CD14-positive monocyte (primary cell): ENCODE measurements at regions of chr7 and their contacts with region 1.

Region 1: DNA sequence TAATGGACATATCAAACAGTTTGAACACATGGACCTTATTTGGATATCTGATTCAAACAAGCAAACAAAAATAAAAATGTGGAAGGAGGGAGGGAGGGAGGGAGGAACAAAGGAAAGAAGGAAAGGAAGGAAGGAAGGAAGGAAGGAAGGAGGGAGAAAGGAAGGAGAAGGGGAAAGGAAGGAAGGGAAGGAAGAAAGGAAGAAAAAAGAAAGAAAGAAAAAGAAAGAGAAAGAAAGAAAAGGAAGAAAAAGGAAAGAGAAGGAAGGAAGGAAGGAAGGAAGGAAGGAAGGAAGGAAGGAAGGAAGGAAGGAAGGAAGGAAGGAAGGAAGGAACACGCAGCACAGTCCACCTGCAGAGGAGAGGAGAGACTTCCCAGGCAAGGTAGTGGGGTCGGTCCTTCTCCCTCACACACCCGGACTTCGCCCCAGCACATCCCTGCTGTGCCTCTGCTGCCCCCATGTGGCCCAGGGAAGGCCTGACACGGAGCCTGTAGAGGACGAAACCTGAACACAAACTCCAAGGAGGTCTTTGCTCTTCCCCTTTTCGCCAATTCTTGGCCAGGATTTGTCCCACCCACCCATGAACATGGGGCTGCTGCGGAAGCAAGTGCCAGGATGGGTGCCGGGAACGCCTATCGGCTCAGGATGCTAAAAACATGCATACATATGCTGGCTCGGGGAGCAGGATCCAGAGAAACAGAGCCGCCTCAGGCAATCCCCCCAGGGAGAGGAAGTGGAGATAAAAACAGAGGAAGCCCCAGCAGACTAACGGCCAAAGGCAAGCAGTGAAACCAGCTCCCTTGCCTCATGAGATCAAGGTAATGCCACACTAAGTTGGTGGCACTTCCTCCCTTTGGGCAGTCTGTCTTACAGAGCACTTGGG is 52.3 kb upstream of the DGKI start:
- DNase-seq: peak; percentile 58 to 72 (median 60)
- H3K4me3 ChIP-seq: peak overlapping the region; percentile 20 to 73 (median 29)
- H3K4me3 Mint-ChIP-seq: peak overlapping the region; percentile 73 to 91
- H3K27ac ChIP-seq: peak overlapping the region; percentile 44 to 77
- H3K27ac Mint-ChIP-seq: peak overlapping the region; percentile 65 to 92 (median 89)
- H3K4me1 ChIP-seq: peaks cover 11 to 30% of the 10 kb centered on the region in 2 donors
- H3K4me1 Mint-ChIP-seq: peaks cover 32% of the 10 kb centered on the region
- H3K27me3 ChIP-seq: no peaks in the 10 kb centered on the region
- H3K27me3 Mint-ChIP-seq: no peaks in the 10 kb centered on the region
- CTCF ChIP-seq: peak; percentile 87

Region 2: GRCh38 chr7:136062625-136063325 is 1836.3 kb before region 1 on chr7:
- intact Hi-C with region 1: no loop called
- DNase-seq: no peak
- H3K4me3 ChIP-seq: no peak overlapping the region
- H3K4me3 Mint-ChIP-seq: no peak overlapping the region
- H3K27ac ChIP-seq: no peak overlapping the region
- H3K27ac Mint-ChIP-seq: no peak overlapping the region
- H3K4me1 ChIP-seq: no peaks in the 10 kb centered on the region
- H3K4me1 Mint-ChIP-seq: no peaks in the 10 kb centered on the region
- H3K27me3 ChIP-seq: no peaks in the 10 kb centered on the region
- H3K27me3 Mint-ChIP-seq: peaks cover 3 to 6% (median 3%) of the 10 kb centered on the region in 3 donors
- CTCF ChIP-seq: no peak

Region 3: DNA sequence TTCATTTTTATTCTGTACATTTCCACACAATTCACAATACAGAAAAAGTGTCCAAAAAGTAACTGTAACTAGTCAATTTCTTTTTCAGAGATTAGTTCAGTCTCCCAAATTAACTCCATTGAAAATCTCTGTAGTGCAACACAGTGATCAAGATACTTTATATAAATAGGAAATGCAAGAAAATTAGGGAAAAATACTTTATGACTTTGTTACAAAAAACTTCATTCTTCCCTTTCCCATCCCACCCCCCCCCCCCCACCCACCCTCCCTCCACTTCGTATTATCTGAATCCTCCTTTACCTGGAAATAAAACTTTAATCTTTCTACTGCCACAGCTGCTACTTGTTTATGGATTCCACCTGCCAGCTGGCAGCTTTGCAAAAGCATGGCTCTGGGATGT is 518.0 kb before region 1 on chr7:
- intact Hi-C with region 1: no loop called
- DNase-seq: no peak
- H3K4me3 ChIP-seq: no peak overlapping the region
- H3K4me3 Mint-ChIP-seq: no peak overlapping the region
- H3K27ac ChIP-seq: no peak overlapping the region
- H3K27ac Mint-ChIP-seq: no peak overlapping the region
- H3K4me1 ChIP-seq: no peaks in the 10 kb centered on the region
- H3K4me1 Mint-ChIP-seq: no peaks in the 10 kb centered on the region
- H3K27me3 ChIP-seq: no peaks in the 10 kb centered on the region
- H3K27me3 Mint-ChIP-seq: no peaks in the 10 kb centered on the region
- CTCF ChIP-seq: no peak

Region 4: GRCh38 chr7:137667633-137668387 is 231.3 kb before region 1 on chr7:
- intact Hi-C with region 1: loop called in 1 of 2 experiments (anchors 10 kb)
- DNase-seq: no peak
- H3K4me3 ChIP-seq: no peak overlapping the region
- H3K4me3 Mint-ChIP-seq: no peak overlapping the region
- H3K27ac ChIP-seq: no peak overlapping the region
- H3K27ac Mint-ChIP-seq: no peak overlapping the region
- H3K4me1 ChIP-seq: no peaks in the 10 kb centered on the region
- H3K4me1 Mint-ChIP-seq: no peaks in the 10 kb centered on the region
- H3K27me3 ChIP-seq: peaks cover 0 to 3% of the 10 kb centered on the region in 2 donors
- H3K27me3 Mint-ChIP-seq: peaks cover 6 to 15% (median 13%) of the 10 kb centered on the region in 3 donors
- CTCF ChIP-seq: no peak

Region 5: GRCh38 chr7:137862964-137863363 is 36.1 kb before region 1 on chr7:
- intact Hi-C with region 1: no loop called
- DNase-seq: no peak
- H3K4me3 ChIP-seq: no peak overlapping the region
- H3K4me3 Mint-ChIP-seq: no peak overlapping the region
- H3K27ac ChIP-seq: no peak overlapping the region
- H3K27ac Mint-ChIP-seq: no peak overlapping the region
- H3K4me1 ChIP-seq: no peaks in the 10 kb centered on the region
- H3K4me1 Mint-ChIP-seq: no peaks in the 10 kb centered on the region
- H3K27me3 ChIP-seq: no peaks in the 10 kb centered on the region
- H3K27me3 Mint-ChIP-seq: no peaks in the 10 kb centered on the region
- CTCF ChIP-seq: no peak

Region 6: DNA sequence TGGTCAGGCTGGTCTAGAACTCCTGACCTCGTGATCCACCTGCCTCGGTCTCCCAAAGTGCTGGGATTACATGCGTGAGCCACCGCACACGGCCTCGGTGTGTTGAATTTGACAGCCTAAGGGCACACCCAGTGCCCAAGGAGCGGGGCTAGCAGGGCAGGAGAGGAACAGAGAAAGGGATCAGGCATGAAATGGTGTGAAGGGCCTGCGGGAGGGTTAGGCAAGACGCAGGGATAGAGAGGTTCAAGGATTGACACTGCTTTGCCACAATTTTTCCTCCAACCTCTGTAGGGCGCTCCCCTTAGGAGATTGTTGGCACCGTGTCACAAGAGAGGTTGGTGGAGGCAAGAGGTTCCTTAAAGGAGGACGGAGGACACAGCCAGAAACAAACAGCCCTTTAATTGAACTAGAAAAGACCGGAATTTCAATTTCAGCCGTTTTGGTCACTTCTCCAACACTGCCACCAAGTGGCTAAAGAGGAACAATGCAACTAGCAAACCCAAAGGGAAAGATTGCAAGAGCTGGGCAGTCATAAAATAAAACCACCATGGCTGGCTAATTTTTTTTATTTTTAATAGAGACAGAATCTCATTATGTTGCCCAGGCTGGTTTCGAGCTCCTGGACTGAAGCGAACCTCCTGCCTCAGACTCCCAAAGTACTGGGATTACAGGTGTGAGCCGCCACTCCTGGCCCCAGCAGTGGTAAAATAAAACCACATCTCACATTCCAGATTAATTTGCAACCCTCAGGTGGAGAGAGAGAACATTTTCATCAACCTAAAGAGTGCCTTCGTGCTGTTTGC is 109.7 kb after region 1 on chr7:
- intact Hi-C with region 1: loop called (anchors 2 kb)
- DNase-seq: peak; percentile 46 to 68 (median 55)
- H3K4me3 ChIP-seq: no peak overlapping the region
- H3K4me3 Mint-ChIP-seq: peak overlapping the region; percentile 44 to 63
- H3K27ac ChIP-seq: no peak overlapping the region
- H3K27ac Mint-ChIP-seq: peak overlapping the region in 3 of 7 donors; percentile 65 to 85 (median 83)
- H3K4me1 ChIP-seq: peaks cover 0 to 4% of the 10 kb centered on the region in 2 donors
- H3K4me1 Mint-ChIP-seq: peaks cover 10% of the 10 kb centered on the region
- H3K27me3 ChIP-seq: no peaks in the 10 kb centered on the region
- H3K27me3 Mint-ChIP-seq: peaks cover 0 to 2% (median 0%) of the 10 kb centered on the region in 3 donors
- CTCF ChIP-seq: peak; percentile 90

Region 7: DNA sequence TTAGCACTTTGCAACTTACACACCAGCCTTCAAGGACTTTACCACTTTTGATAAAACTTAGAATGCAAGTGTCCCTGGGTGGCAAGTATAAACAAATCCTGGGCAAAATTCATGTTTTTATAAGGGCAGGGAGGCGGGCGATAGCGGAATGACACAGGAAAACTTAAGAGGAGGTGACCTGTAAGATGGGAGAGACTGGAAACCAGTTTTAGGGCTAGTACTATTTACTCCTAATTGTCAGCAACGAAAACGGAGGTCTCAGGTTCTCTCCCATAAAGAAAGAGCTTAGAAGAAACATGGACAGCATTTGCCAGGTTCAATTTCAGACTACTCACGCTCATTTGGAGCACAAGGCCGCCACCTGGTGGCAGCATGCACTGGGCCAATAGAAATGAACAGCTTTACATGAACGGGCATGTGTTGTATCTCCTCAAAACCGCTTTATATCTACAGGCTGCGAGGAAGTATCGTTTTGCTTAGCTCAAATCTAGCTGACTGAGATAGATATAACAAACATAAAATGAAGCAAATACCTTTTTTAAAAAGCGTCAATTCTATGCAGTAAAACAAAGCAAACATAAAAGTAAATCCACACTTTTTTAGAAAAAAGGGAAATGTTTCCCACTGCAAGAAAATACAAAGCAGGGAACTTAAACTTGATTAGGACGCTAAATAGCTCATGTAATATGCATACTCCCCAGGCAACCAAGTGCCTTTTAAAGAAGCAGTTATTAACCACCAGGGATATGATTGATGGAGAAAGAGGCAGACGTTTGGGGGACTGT is 839.7 kb after region 1 on chr7:
- intact Hi-C with region 1: loop called (anchors 2 to 10 kb)
- DNase-seq: peak; percentile 56 to 61 (median 58)
- H3K4me3 ChIP-seq: no peak overlapping the region
- H3K4me3 Mint-ChIP-seq: peak overlapping the region in 1 of 2 donors; percentile 64
- H3K27ac ChIP-seq: no peak overlapping the region
- H3K27ac Mint-ChIP-seq: no peak overlapping the region
- H3K4me1 ChIP-seq: no peaks in the 10 kb centered on the region
- H3K4me1 Mint-ChIP-seq: peaks cover 7% of the 10 kb centered on the region
- H3K27me3 ChIP-seq: no peaks in the 10 kb centered on the region
- H3K27me3 Mint-ChIP-seq: peaks cover 0 to 5% (median 1%) of the 10 kb centered on the region in 3 donors
- CTCF ChIP-seq: peak; percentile 94